Heart right ventricle (tissue), 16 donors: ENCODE measurements at regions of chr21 and their contacts with region 1.

Region 1: GRCh38 chr21:36945496-36946138 is 20.9 kb downstream of the HLCS start:
- DNase-seq: no peak
- ATAC-seq: no peak
- H3K4me3 ChIP-seq: no peak overlapping the region
- H3K27ac ChIP-seq: no peak overlapping the region
- H3K4me1 ChIP-seq: peaks cover 0 to 10% (median 0%) of the 10 kb centered on the region in 9 donors
- H3K27me3 ChIP-seq: no peaks in the 10 kb centered on the region
- CTCF ChIP-seq: no peak

Region 2: GRCh38 chr21:36960666-36961284 is 15.2 kb after region 1 on chr21:
- intact Hi-C with region 1: loop called in 1 of 10 experiments (anchors 1 kb)
- DNase-seq: no peak
- ATAC-seq: peak in 1 of 8 donors; percentile 14
- H3K4me3 ChIP-seq: no peak overlapping the region
- H3K27ac ChIP-seq: no peak overlapping the region
- H3K4me1 ChIP-seq: peaks cover 0 to 9% (median 0%) of the 10 kb centered on the region in 9 donors
- H3K27me3 ChIP-seq: no peaks in the 10 kb centered on the region
- CTCF ChIP-seq: no peak